ENCODE measurements at regions of chr13 and their contacts with region 1.

Region 1: DNA sequence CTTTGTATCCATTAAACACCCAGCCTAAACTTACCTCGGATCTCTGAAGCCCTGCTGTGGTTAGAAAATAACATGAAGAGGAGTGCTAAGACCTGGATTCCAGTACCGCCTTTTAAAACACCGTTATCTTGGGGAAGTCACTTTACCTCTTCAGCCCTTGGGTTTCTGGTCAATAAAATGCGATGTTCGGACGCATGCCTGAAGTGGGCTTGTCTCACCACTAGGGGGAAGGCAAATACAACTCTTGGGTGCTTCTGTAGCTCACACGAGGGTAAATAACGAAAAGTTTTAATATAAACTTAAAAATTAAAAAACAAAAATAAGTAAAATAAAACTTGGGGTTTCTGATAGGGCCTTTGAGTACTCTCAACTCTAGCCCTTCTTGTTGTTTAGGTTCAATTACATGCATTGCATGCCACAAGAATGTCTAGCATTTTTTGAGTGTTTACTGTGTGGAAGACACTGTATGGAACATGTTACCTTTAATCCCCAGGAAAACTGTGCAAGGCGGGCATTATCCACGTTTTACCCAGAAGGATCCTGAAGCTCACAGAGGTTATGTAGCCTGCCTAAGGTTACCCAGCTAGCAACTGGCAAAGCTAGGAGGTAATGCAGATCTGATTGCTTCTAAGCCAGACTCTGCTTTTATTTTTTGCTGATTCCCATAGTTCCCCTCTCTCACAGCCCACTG is 240.4 kb downstream of the LMO7 start:
- DNase-seq: peak; percentile 52 to 74 (median 54)
- ATAC-seq: peak; percentile 98
- H3K4me3 ChIP-seq: no peak overlapping the region
- H3K27ac ChIP-seq: no peak overlapping the region
- H3K4me1 ChIP-seq: no peaks in the 10 kb centered on the region
- H3K27me3 ChIP-seq: no peaks in the 10 kb centered on the region
- CTCF ChIP-seq: peak; percentile 74 to 84 (median 75)
- EP300 ChIP-seq: no peak
- POLR2A ChIP-seq: no peak
- RAD21 ChIP-seq: peak; percentile 86 to 87

Region 2: GRCh38 chr13:75694722-75695121 is 181.8 kb before region 1 on chr13:
- CTCF ChIA-PET with region 1: interaction called, 3 read pairs
- POLR2A ChIA-PET with region 1: no interaction called
- in situ Hi-C with region 1: no loop called
- intact Hi-C with region 1: loop called (anchors 5 kb)
- DNase-seq: no peak
- ATAC-seq: no peak
- H3K4me3 ChIP-seq: no peak overlapping the region
- H3K27ac ChIP-seq: no peak overlapping the region
- H3K4me1 ChIP-seq: no peaks in the 10 kb centered on the region
- H3K27me3 ChIP-seq: no peaks in the 10 kb centered on the region
- CTCF ChIP-seq: no peak
- EP300 ChIP-seq: no peak
- POLR2A ChIP-seq: no peak
- RAD21 ChIP-seq: no peak

Region 3: GRCh38 chr13:76016799-76017400 is 140.4 kb after region 1 on chr13:
- CTCF ChIA-PET with region 1: interaction called, 9 read pairs
- POLR2A ChIA-PET with region 1: no interaction called
- in situ Hi-C with region 1: loop called (anchors 5 kb)
- intact Hi-C with region 1: loop called (anchors 1 kb)
- DNase-seq: peak; percentile 13 to 58 (median 16)
- ATAC-seq: peak; percentile 92
- H3K4me3 ChIP-seq: no peak overlapping the region
- H3K27ac ChIP-seq: no peak overlapping the region
- H3K4me1 ChIP-seq: no peaks in the 10 kb centered on the region; a peak in 1 of 5 replicates
- H3K27me3 ChIP-seq: no peaks in the 10 kb centered on the region
- CTCF ChIP-seq: peak; percentile 51 to 62 (median 61); a peak in 5 of 6 replicates
- EP300 ChIP-seq: no peak
- POLR2A ChIP-seq: no peak
- RAD21 ChIP-seq: peak; percentile 31 to 68; a peak in 2 of 4 replicates

Region 4: GRCh38 chr13:76160961-76161925 is 284.7 kb after region 1 on chr13:
- CTCF ChIA-PET with region 1: no interaction called
- POLR2A ChIA-PET with region 1: no interaction called
- in situ Hi-C with region 1: no loop called
- intact Hi-C with region 1: loop called (anchors 10 kb)
- DNase-seq: no peak
- ATAC-seq: no peak
- H3K4me3 ChIP-seq: no peak overlapping the region
- H3K27ac ChIP-seq: no peak overlapping the region
- H3K4me1 ChIP-seq: no peaks in the 10 kb centered on the region
- H3K27me3 ChIP-seq: no peaks in the 10 kb centered on the region
- CTCF ChIP-seq: no peak
- EP300 ChIP-seq: no peak
- POLR2A ChIP-seq: no peak
- RAD21 ChIP-seq: no peak

Region 5: GRCh38 chr13:76980075-76980718 is 1103.7 kb after region 1 on chr13:
- CTCF ChIA-PET with region 1: no interaction called
- POLR2A ChIA-PET with region 1: no interaction called
- in situ Hi-C with region 1: no loop called
- intact Hi-C with region 1: loop called (anchors 10 kb)
- DNase-seq: peak; percentile 75 to 83 (median 78)
- ATAC-seq: peak; percentile 100
- H3K4me3 ChIP-seq: no peak overlapping the region
- H3K27ac ChIP-seq: no peak overlapping the region
- H3K4me1 ChIP-seq: peaks cover 0 to 4% of the 10 kb centered on the region in 2 experiments; a peak in 2 of 5 replicates
- H3K27me3 ChIP-seq: peaks cover 0 to 11% of the 10 kb centered on the region in 2 experiments; a peak in 1 of 5 replicates
- CTCF ChIP-seq: peak; percentile 70 to 82 (median 77)
- EP300 ChIP-seq: no peak
- POLR2A ChIP-seq: no peak
- RAD21 ChIP-seq: peak; percentile 64 to 73